Heart left ventricle (tissue), 16 donors: ENCODE measurements at regions of chr14 and their contacts with region 1.

Region 1: DNA sequence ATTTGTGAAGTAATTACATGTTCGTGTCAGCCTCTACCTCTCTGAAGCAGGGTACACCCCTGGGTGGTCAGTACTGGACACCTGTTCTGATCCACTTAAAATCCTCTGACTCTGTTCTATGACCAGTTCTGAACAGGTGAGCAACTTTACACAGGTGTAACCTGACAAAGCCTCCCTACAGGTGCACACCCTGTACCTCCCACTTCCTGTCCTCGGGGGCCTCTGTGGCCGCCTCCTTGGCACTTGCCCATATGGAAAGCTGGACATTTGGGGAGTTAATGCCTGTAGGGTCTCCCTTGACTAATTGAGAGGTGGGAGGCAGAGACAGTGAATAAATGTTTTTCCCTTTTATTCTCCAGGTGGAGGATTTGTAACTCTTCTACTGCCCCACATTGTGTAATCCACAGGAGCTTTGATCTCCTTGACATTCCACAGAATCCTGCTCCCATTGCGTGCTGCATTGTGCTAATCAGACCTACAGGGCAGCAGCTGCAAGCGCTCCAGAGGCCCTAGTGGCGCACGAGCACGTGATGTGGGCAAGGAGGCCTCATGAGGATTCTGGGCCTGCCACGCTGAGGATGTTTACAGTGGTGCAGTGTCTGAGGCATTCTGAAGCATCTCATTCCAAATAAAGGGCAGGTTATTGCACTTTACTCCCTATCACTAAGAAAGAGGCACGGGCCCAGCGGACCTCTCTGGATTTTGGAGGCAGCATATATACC is 45.8 kb upstream of the BATF start:
- DNase-seq: peak in 2 of 5 donors; percentile 39 to 55
- ATAC-seq: peak in 3 of 4 donors; percentile 61 to 82 (median 73)
- H3K4me3 ChIP-seq: no peak overlapping the region
- H3K27ac ChIP-seq: no peak overlapping the region
- H3K4me1 ChIP-seq: no peaks in the 10 kb centered on the region
- H3K27me3 ChIP-seq: no peaks in the 10 kb centered on the region
- CTCF ChIP-seq: peak in 2 of 12 donors; percentile 7 to 13
- POLR2A ChIP-seq: no peak

Region 2: DNA sequence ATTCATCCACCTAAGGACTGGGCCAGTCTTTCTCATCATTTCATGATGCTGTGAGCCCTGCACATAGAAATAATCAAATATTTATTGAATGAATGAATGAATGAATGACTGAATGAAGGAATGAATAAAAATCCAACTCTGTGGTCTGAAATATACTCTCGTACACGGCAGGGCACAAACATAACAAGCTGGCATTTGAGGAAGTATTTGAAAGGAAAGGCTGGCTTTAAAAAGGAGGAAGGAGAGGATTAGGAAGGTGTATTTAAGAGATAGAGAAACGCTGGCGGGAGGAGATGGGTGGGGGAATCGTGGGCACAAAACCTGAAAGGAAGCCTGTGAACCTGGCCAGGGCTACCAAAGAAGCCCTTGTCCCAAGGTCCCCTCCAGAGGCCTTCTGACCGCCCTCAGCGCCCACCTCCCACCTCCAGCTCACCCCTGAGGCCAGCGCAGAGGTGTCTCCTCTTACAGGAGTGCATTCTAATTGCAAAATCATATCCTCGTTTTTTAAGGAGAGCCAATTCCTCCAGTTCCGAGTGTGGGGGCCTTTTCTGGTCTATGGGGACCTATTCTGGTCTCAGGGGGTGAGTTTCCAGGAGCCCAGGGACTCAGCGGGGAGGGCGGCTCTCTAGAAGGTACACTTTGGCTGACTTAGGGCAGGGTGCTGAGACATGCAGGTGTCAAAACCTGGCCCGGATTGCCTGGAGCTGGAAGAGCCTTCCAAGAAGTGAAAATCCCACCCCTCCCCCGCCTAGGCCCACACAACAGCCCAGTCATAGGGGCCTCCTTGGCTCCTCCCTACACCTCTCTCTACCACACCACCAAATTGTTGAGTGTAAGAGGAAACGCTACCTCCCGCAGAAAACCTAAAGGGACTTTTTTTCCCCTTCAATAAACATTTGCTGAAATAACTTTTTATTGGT is 57.3 kb before region 1 on chr14:
- intact Hi-C with region 1: no loop called
- DNase-seq: peak in 1 of 5 donors; percentile 47
- ATAC-seq: peak; percentile 53 to 77 (median 66)
- H3K4me3 ChIP-seq: peak overlapping the region in 2 of 12 donors; percentile 25 to 27
- H3K27ac ChIP-seq: peak overlapping the region in 4 of 12 donors; percentile 21 to 38 (median 34)
- H3K4me1 ChIP-seq: peaks cover 0 to 37% (median 4%) of the 10 kb centered on the region in 12 donors
- H3K27me3 ChIP-seq: no peaks in the 10 kb centered on the region
- CTCF ChIP-seq: no peak
- POLR2A ChIP-seq: no peak

Region 3: GRCh38 chr14:75439989-75440388 is 36.4 kb before region 1 on chr14:
- intact Hi-C with region 1: loop called in 2 of 10 experiments (anchors 5 to 10 kb)
- DNase-seq: no peak
- ATAC-seq: no peak
- H3K4me3 ChIP-seq: no peak overlapping the region
- H3K27ac ChIP-seq: no peak overlapping the region
- H3K4me1 ChIP-seq: peaks cover 0 to 85% (median 39%) of the 10 kb centered on the region in 12 donors
- H3K27me3 ChIP-seq: no peaks in the 10 kb centered on the region
- CTCF ChIP-seq: no peak
- POLR2A ChIP-seq: no peak